ENCODE measurements at regions of chr1 and their contacts with region 1.

Region 1: DNA sequence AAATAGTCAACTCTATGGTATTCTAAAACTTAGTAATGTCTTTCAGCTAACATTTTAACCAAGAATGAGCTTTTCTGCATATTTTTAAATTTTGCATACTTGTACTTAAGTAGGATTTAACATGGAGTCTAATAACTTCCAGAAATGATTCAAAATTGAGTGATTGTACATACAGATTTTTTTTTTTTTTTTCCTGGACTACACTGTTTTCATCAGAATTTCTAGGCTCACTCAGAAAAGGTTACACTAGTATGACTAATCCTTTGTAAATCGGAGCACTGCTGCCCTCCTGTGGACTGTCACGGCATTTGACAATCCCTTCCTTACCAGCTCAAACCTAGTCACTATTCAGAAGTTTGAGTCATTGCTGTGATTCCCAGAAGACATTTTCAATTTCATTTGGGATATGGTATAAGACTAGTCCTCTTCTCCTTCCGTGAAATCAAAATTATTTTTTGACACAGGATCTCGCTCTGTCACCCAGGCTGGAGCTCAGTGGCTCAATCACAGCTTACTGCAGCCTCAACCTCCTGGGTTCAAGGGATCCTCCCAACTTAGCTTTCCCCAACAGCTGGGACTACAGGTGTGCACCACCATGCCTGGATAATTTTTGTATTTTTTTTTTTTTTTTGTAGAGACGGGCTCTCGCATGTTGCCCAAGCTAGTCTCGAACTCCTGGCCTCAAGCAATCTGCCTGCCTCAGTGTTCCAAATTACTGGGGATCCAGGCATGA is 45.5 kb downstream of the CD46 start:
- DNase-seq: peak; percentile 90
- ATAC-seq: peak; percentile 91
- H3K4me3 Mint-ChIP-seq: no peak overlapping the region
- H3K27ac Mint-ChIP-seq: no peak overlapping the region
- H3K4me1 Mint-ChIP-seq: peaks cover 36% of the 10 kb centered on the region
- H3K27me3 Mint-ChIP-seq: no peaks in the 10 kb centered on the region

Region 2: DNA sequence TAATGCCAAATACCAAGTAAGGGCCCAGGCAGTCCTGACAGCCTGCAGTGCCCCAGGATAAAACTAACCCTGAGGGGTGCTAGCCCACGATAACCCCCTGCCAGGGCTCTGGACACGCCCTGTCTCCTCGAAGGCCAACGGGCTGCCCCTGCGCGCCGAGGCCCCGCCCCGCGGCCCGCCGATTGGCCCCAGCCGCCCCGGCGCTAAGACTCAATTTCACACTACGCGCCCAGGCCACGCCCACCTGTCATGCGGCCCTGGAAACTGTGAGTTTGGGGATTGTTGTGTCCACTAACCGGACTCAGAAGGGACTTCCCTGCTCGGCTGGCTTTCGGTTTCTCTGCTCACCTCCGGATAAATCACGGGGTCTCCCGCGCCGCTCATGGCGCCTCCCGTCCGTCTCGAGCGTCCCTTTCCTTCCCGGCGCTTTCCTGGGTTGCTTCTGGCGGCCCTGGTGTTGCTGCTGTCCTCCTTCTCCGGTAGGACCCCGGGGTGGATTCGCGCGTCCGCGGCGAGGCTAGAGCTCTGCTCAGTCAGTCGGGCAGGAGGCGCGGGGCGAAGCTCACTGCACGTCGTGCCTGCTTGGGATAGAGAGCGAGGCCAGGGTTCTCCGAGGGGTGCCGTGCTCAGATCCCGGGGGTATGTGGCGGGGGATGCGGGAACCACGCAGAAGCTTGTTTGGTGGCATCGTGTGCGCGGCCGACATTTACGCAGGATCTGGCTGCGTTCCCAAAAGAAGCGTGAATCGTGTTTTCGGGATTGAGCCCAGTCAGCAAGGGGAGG is 152.4 kb before region 1 on chr1 and contains the start of gene CR1L:
- CTCF ChIA-PET with region 1: no interaction called
- POLR2A ChIA-PET with region 1: no interaction called
- intact Hi-C with region 1: loop called in 1 of 2 experiments (anchors 5 kb)
- DNase-seq: peak; percentile 88
- ATAC-seq: peak; percentile 100
- H3K4me3 Mint-ChIP-seq: peak within 1 kb of the TSS; percentile 64
- H3K27ac Mint-ChIP-seq: no peak within 1 kb of the TSS
- H3K4me1 Mint-ChIP-seq: peaks cover 8% of the 10 kb centered on the region
- H3K27me3 Mint-ChIP-seq: peaks cover 15% of the 10 kb centered on the region
- total RNA-seq, gene CR1L: not detected

Region 3: DNA sequence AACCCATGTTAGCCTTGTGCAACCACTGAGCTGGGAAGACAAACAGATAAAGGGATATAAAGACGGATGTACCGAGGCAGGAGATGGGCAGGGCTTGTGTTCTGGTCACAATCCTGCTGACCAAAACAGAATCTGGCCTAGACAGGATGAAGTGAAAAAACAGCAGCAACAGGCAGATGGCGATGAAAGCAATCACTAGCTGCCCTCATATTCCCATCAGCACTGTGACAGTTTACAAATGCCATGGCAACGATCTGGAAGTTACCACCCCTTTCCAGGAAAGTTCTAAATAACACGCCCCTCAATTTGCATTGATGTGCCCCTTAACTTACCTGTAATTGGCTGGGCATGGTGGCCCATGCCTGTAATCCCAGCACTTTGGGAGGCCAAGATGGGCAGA is 86.1 kb before region 1 on chr1:
- CTCF ChIA-PET with region 1: interaction called, 8 read pairs
- POLR2A ChIA-PET with region 1: no interaction called
- intact Hi-C with region 1: loop called in 1 of 2 experiments (anchors 2 kb)
- DNase-seq: no peak
- ATAC-seq: no peak
- H3K4me3 Mint-ChIP-seq: no peak overlapping the region
- H3K27ac Mint-ChIP-seq: no peak overlapping the region
- H3K4me1 Mint-ChIP-seq: no peaks in the 10 kb centered on the region
- H3K27me3 Mint-ChIP-seq: no peaks in the 10 kb centered on the region

Region 4: DNA sequence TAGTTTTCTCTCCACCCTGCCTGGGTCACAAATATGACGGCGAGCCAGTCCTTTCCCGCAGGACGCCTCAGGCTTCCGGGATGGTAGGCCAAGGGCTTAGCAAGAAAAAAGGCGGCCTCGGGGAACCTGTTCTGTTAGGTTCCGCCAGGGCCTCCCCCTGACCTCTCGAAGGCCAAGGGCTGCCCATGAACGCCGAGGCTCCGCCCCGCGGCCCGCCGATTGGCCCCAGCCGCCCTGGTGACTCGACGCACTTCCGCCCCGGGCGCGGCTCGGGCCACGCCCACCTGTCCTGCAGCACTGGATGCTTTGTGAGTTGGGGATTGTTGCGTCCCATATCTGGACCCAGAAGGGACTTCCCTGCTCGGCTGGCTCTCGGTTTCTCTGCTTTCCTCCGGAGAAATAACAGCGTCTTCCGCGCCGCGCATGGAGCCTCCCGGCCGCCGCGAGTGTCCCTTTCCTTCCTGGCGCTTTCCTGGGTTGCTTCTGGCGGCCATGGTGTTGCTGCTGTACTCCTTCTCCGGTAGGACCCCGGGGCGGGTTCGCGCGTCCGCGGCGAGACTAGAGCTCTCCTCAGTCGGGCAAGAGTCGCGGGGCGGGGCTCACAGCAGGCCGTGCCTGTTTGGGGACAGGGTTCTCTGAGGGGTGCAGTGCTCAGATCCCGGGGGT is 45.5 kb before region 1 on chr1 and contains the start of gene CD46:
- CTCF ChIA-PET with region 1: interaction called, 3 read pairs
- POLR2A ChIA-PET with region 1: no interaction called
- intact Hi-C with region 1: loop called (anchors 1 to 5 kb)
- DNase-seq: peak; percentile 97
- ATAC-seq: peak; percentile 97
- H3K4me3 Mint-ChIP-seq: peak within 1 kb of the TSS; percentile 99
- H3K27ac Mint-ChIP-seq: peak within 1 kb of the TSS; percentile 97
- H3K4me1 Mint-ChIP-seq: peaks cover 62% of the 10 kb centered on the region
- H3K27me3 Mint-ChIP-seq: no peaks in the 10 kb centered on the region
- total RNA-seq, gene CD46: 92.2 to 92.7 TPM

Region 5: GRCh38 chr1:207811920-207812720 is 14.7 kb after region 1 on chr1:
- CTCF ChIA-PET with region 1: interaction called, 25 read pairs
- POLR2A ChIA-PET with region 1: interaction called, 4 read pairs
- intact Hi-C with region 1: no loop called
- DNase-seq: no peak
- ATAC-seq: no peak
- H3K4me3 Mint-ChIP-seq: no peak overlapping the region
- H3K27ac Mint-ChIP-seq: peak overlapping the region; percentile 81
- H3K4me1 Mint-ChIP-seq: peaks cover 70% of the 10 kb centered on the region
- H3K27me3 Mint-ChIP-seq: no peaks in the 10 kb centered on the region

Region 6: GRCh38 chr1:207963427-207964194 is 166.2 kb after region 1 on chr1:
- CTCF ChIA-PET with region 1: interaction called, 27 read pairs
- POLR2A ChIA-PET with region 1: no interaction called
- intact Hi-C with region 1: loop called (anchors 1 kb)
- DNase-seq: peak; percentile 90
- ATAC-seq: peak; percentile 82
- H3K4me3 Mint-ChIP-seq: peak overlapping the region; percentile 75
- H3K27ac Mint-ChIP-seq: peak overlapping the region; percentile 71
- H3K4me1 Mint-ChIP-seq: peaks cover 2% of the 10 kb centered on the region
- H3K27me3 Mint-ChIP-seq: peaks cover 18% of the 10 kb centered on the region

Region 7: GRCh38 chr1:207997486-207998268 is 200.3 kb after region 1 on chr1:
- CTCF ChIA-PET with region 1: no interaction called
- POLR2A ChIA-PET with region 1: no interaction called
- intact Hi-C with region 1: no loop called
- DNase-seq: peak; percentile 75
- ATAC-seq: peak; percentile 87
- H3K4me3 Mint-ChIP-seq: no peak overlapping the region
- H3K27ac Mint-ChIP-seq: no peak overlapping the region
- H3K4me1 Mint-ChIP-seq: no peaks in the 10 kb centered on the region
- H3K27me3 Mint-ChIP-seq: peaks cover 9% of the 10 kb centered on the region

Measured in activated CD4-positive, alpha-beta T cell treated with anti-CD3 and anti-CD28 coated beads for 36 hours (primary cell).